T-cell (primary cell): ENCODE measurements at regions of chr7 and their contacts with region 1.

Region 1: GRCh38 chr7:26167301-26167934 is 15.4 kb downstream of the NFE2L3 start:
- DNase-seq: peak in 16 of 35 experiments; percentile 16 to 70 (median 30)
- ATAC-seq: peak; percentile 45 to 86 (median 76)
- H3K4me3 ChIP-seq: no peak overlapping the region
- H3K4me3 Mint-ChIP-seq: no peak overlapping the region
- H3K27ac ChIP-seq: peak overlapping the region; percentile 77
- H3K27ac Mint-ChIP-seq: peak overlapping the region; percentile 62 to 79
- H3K4me1 ChIP-seq: peaks cover 5 to 14% of the 10 kb centered on the region in 2 experiments
- H3K4me1 Mint-ChIP-seq: peaks cover 13 to 29% (median 20%) of the 10 kb centered on the region in 3 donors
- H3K27me3 ChIP-seq: no peaks in the 10 kb centered on the region
- H3K27me3 Mint-ChIP-seq: no peaks in the 10 kb centered on the region

Region 2: GRCh38 chr7:25901658-25902057 is 265.8 kb before region 1 on chr7:
- CTCF ChIA-PET with region 1: no interaction called
- POLR2A ChIA-PET with region 1: no interaction called
- DNase-seq: no peak
- ATAC-seq: no peak
- H3K4me3 ChIP-seq: no peak overlapping the region
- H3K4me3 Mint-ChIP-seq: no peak overlapping the region
- H3K27ac ChIP-seq: no peak overlapping the region
- H3K27ac Mint-ChIP-seq: no peak overlapping the region
- H3K4me1 ChIP-seq: no peaks in the 10 kb centered on the region
- H3K4me1 Mint-ChIP-seq: no peaks in the 10 kb centered on the region
- H3K27me3 ChIP-seq: no peaks in the 10 kb centered on the region
- H3K27me3 Mint-ChIP-seq: peaks cover 3 to 4% of the 10 kb centered on the region in 2 donors

Region 3: GRCh38 chr7:25968205-25968993 is 199.0 kb before region 1 on chr7:
- CTCF ChIA-PET with region 1: no interaction called
- POLR2A ChIA-PET with region 1: interaction called in 1 of 2 experiments, 12 read pairs
- DNase-seq: peak in 7 of 35 experiments; percentile 2 to 48 (median 12)
- ATAC-seq: peak; percentile 34 to 68 (median 60)
- H3K4me3 ChIP-seq: peak overlapping the region in 1 of 2 donors; percentile 18
- H3K4me3 Mint-ChIP-seq: peak overlapping the region; percentile 10 to 56 (median 44)
- H3K27ac ChIP-seq: no peak overlapping the region
- H3K27ac Mint-ChIP-seq: no peak overlapping the region
- H3K4me1 ChIP-seq: peaks cover 0 to 19% of the 10 kb centered on the region in 2 experiments
- H3K4me1 Mint-ChIP-seq: peaks cover 10 to 18% (median 17%) of the 10 kb centered on the region in 3 donors
- H3K27me3 ChIP-seq: peaks cover 0 to 12% of the 10 kb centered on the region in 2 experiments
- H3K27me3 Mint-ChIP-seq: peaks cover 46 to 51% of the 10 kb centered on the region in 2 donors